Breast epithelium (tissue), 4 donors: ENCODE measurements at regions of chr17 and their contacts with region 1.

Region 1: DNA sequence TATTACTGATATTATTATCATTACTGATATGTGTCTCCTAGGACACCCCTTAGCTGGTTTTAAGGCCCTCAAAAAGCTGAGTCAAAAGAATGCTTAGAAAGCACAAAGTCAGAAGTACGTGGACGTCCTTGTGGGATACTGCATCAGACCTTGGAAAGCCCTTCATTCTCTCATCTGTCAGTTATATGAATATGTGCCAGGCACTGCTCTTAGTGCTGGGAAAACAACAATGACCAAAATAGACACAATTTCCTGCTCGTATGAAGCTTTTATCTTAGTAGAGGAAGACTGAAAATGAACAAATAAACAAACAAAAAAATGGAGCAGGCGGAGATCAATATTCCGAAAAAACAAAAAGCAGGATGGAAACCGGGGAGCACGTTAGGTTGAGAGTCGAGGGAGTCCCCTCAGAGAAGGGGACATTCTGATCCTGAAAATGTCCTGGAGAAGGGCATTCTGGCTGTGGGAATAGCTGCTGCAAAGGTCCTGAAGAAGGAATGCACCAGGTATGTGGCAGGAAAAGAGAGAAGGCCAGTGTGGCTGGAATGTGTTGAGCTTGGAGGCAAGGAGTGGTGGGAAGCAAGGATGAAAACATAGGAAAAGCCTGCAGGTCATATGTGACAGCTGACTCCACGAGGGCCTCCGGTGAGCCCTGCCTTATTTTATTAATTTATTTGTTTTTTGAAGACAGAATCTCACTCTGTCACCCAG is 15.5 kb upstream of the TMEM94 start:
- DNase-seq: no peak
- H3K4me3 ChIP-seq: no peak overlapping the region
- H3K27ac ChIP-seq: peak overlapping the region in 1 of 2 donors; percentile 43
- H3K4me1 ChIP-seq: no peaks in the 10 kb centered on the region
- H3K27me3 ChIP-seq: no peaks in the 10 kb centered on the region
- CTCF ChIP-seq: no peak
- POLR2A ChIP-seq: no peak

Region 2: DNA sequence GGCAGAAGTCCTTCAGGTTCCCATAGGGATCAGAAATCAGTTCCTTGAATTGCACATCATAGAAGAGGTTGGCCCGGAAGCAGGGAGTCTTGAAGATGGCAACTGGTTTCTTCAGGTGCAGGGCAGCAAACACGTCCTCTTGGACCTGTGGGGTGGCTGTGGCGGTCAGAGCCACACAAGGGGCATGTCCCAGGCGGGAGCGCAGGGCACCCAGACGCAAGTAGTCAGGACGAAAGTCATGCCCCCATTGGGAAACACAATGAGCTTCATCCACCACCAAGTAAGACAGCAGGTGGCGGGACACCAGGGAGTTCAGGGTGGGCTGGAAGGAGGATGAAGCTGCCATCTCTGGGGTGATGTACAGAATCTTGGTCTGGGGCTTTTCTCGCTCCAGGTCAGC is 221.6 kb after region 1 on chr17:
- intact Hi-C with region 1: loop called (anchors 2 kb)
- DNase-seq: no peak
- H3K4me3 ChIP-seq: no peak overlapping the region
- H3K27ac ChIP-seq: no peak overlapping the region
- H3K4me1 ChIP-seq: peaks cover 0 to 6% of the 10 kb centered on the region in 2 donors
- H3K27me3 ChIP-seq: no peaks in the 10 kb centered on the region
- CTCF ChIP-seq: no peak
- POLR2A ChIP-seq: no peak